ENCODE measurements at regions of chr1 and their contacts with region 1.

Region 1: GRCh38 chr1:19918057-19918456 is 5.4 kb downstream of the PLA2G2E start:
- ATAC-seq: peak; percentile 79 to 94 (median 89)
- H3K4me3 ChIP-seq: no peak overlapping the region
- H3K27ac ChIP-seq: no peak overlapping the region
- H3K4me1 ChIP-seq: peaks cover 0 to 6% of the 10 kb centered on the region in 2 donors

Region 2: GRCh38 chr1:20151906-20152598 is 234.0 kb after region 1 on chr1:
- in situ Hi-C with region 1: loop called in 4 of 9 experiments (anchors 10 to 25 kb)
- ATAC-seq: peak; percentile 85 to 99 (median 92)
- H3K4me3 ChIP-seq: peak overlapping the region; percentile 11 to 25 (median 19)
- H3K27ac ChIP-seq: no peak overlapping the region
- H3K4me1 ChIP-seq: peaks cover 0 to 15% of the 10 kb centered on the region in 2 donors

Region 3: GRCh38 chr1:20165522-20165951 is 247.5 kb after region 1 on chr1:
- in situ Hi-C with region 1: loop called in 4 of 9 experiments (anchors 10 to 25 kb)
- ATAC-seq: peak in 3 of 8 experiments; percentile 18 to 62 (median 24)
- H3K4me3 ChIP-seq: no peak overlapping the region
- H3K27ac ChIP-seq: no peak overlapping the region
- H3K4me1 ChIP-seq: peaks cover 4 to 11% of the 10 kb centered on the region in 2 donors

Region 4: GRCh38 chr1:20194757-20195461 is 276.9 kb after region 1 on chr1:
- in situ Hi-C with region 1: loop called in 1 of 9 experiments (anchors 25 kb)
- ATAC-seq: peak in 3 of 8 experiments; percentile 55 to 67 (median 65)
- H3K4me3 ChIP-seq: no peak overlapping the region
- H3K27ac ChIP-seq: no peak overlapping the region
- H3K4me1 ChIP-seq: peaks cover 0 to 3% of the 10 kb centered on the region in 2 donors

Region 5: GRCh38 chr1:20493839-20494608 is 576.0 kb after region 1 on chr1:
- in situ Hi-C with region 1: loop called in 5 of 9 experiments (anchors 10 to 25 kb)
- ATAC-seq: peak; percentile 74 to 93 (median 90)
- H3K4me3 ChIP-seq: no peak overlapping the region
- H3K27ac ChIP-seq: peak overlapping the region; percentile 38 to 61
- H3K4me1 ChIP-seq: peaks cover 11 to 13% of the 10 kb centered on the region in 2 donors

Region 6: DNA sequence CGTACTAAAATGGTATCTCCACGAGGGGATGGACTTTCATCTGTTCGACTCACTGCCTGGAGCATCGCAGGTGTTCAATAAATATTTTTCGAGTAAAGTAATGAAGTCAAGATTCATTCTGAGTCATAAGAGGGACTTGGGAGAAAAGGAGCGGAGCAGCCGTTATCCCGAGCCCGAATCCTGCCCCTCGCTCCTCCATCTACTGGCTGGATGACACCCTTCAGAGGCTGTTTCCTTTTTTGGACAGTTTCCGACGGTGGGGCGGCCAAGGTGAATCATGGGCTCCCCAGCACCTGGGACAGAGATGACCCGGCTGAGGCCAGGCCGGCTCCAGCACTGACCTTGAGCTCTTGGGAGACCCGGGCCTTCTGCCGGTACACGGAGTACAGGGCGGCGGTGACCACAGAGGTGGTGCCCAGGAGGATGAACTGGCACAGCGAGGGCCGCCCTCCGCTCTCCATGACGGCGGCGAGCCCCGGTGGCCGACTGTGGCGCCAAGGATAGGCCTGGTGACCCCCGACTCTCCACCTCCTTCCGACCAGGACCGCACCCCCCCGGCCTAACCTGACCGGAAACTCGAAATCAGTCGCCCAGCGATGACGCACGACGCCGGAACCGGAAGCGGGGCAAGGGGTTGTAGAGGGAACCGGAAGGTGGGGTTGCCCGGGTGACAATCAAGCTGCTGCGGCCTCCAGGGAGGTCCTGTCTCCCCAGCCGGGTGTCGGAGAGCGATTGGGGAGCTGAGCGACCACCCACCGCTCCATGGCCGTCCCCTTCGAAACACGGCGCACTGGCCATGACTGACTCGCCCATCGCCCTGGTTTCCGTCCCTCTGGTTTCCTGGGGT is 589.7 kb after region 1 on chr1 and contains the start of gene MUL1:
- in situ Hi-C with region 1: loop called in 1 of 9 experiments (anchors 10 kb)
- ATAC-seq: peak; percentile 89 to 97 (median 93)
- H3K4me3 ChIP-seq: peak within 1 kb of the TSS; percentile 70 to 98 (median 89)
- H3K27ac ChIP-seq: peak within 1 kb of the TSS; percentile 65 to 89
- H3K4me1 ChIP-seq: peaks cover 25 to 38% of the 10 kb centered on the region in 2 donors
- total RNA-seq, gene MUL1: 21.0 to 36.3 (median 29.5) TPM

Region 7: DNA sequence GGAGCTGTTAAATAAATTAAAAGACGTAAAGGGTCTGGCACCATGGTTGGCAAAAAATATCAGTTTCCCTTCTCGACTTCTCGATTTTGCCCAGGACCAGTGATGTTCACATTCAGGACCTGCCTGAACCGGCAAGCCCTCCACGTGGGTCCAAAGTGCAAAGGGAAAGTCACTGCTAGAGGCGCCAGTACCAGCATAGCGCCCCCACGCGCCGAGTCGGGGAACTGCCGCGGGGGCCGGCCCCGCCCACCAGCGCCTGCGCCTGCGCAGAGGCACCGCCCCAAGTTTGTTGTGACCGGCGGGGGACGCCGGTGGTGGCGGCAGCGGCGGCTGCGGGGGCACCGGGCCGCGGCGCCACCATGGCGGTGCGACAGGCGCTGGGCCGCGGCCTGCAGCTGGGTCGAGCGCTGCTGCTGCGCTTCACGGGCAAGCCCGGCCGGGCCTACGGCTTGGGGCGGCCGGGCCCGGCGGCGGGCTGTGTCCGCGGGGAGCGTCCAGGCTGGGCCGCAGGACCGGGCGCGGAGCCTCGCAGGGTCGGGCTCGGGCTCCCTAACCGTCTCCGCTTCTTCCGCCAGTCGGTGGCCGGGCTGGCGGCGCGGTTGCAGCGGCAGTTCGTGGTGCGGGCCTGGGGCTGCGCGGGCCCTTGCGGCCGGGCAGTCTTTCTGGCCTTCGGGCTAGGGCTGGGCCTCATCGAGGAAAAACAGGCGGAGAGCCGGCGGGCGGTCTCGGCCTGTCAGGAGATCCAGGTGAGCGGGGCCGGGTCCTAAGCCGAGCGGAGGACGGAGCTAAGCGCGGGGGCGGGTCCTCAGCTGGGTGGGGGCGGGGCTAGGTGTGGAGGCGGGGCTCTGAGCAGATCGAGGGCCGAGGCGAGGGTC is 715.4 kb after region 1 on chr1 and contains the start of gene PINK1:
- in situ Hi-C with region 1: loop called in 1 of 9 experiments (anchors 25 kb)
- ATAC-seq: peak; percentile 75 to 91 (median 87)
- H3K4me3 ChIP-seq: peak within 1 kb of the TSS; percentile 66 to 94 (median 82)
- H3K27ac ChIP-seq: peak within 1 kb of the TSS; percentile 74 to 80
- H3K4me1 ChIP-seq: peaks cover 5 to 7% of the 10 kb centered on the region in 2 donors
- total RNA-seq, gene PINK1: 22.7 to 117 (median 51.4) TPM

Measured in motor neuron (in vitro differentiated cells).